ENCODE measurements at regions of chr11 and their contacts with region 1.

Region 1: DNA sequence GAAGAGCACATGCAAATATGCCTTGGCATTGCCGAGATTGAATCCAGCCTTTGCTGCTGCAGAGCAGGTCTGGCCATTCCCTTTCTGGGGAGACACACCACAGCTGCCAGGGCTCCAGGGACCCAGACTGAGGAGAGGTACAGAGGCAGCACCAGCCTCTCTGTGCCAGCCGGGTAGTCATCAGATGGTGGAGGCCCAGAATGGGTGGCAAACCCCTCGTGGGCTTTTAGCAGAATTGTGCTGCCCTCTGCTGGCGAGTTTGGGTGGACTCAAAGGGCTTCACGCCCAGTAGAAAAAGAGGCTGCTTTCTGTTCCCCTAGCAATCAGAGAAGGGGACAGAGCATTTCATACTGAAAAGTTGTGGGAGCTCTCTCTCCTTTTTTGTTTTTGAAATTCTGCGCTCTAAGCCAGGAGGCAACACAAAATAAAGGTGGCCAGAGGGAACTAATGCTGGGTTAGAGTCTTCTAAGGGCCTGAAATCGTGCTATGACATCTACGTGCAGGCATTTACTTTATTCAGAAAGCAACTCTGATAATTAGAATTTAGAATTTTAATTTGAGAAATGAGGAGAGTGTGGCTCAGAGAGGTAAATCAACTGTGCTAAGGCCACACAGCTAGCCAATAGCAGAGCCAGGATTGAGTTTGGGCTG is 158.8 kb upstream of the NAV2 start:
- DNase-seq: peak; percentile 80
- H3K4me3 ChIP-seq: peak overlapping the region in 1 of 2 experiments; percentile 17; a peak in 1 of 4 replicates
- H3K27ac ChIP-seq: no peak overlapping the region
- H3K4me1 ChIP-seq: peaks cover 0 to 14% of the 10 kb centered on the region in 2 experiments; a peak in 2 of 4 replicates
- H3K27me3 ChIP-seq: peaks cover 6% of the 10 kb centered on the region; the same call in 1 of the 2 replicates
- CTCF ChIP-seq: peak; percentile 86
- EP300 ChIP-seq: no peak
- RAD21 ChIP-seq: peak; percentile 99

Region 2: GRCh38 chr11:19076744-19077589 is 476.8 kb before region 1 on chr11:
- CTCF ChIA-PET with region 1: interaction called, 328 read pairs
- POLR2A ChIA-PET with region 1: no interaction called
- DNase-seq: peak; percentile 80
- H3K4me3 ChIP-seq: no peak overlapping the region; a peak in 1 of 4 replicates
- H3K27ac ChIP-seq: peak overlapping the region in 1 of 2 experiments; percentile 39; a peak in 1 of 4 replicates
- H3K4me1 ChIP-seq: peaks cover 0 to 15% of the 10 kb centered on the region in 2 experiments; a peak in 3 of 4 replicates
- H3K27me3 ChIP-seq: no peaks in the 10 kb centered on the region
- CTCF ChIP-seq: peak; percentile 98
- EP300 ChIP-seq: no peak
- RAD21 ChIP-seq: peak; percentile 72

Region 3: DNA sequence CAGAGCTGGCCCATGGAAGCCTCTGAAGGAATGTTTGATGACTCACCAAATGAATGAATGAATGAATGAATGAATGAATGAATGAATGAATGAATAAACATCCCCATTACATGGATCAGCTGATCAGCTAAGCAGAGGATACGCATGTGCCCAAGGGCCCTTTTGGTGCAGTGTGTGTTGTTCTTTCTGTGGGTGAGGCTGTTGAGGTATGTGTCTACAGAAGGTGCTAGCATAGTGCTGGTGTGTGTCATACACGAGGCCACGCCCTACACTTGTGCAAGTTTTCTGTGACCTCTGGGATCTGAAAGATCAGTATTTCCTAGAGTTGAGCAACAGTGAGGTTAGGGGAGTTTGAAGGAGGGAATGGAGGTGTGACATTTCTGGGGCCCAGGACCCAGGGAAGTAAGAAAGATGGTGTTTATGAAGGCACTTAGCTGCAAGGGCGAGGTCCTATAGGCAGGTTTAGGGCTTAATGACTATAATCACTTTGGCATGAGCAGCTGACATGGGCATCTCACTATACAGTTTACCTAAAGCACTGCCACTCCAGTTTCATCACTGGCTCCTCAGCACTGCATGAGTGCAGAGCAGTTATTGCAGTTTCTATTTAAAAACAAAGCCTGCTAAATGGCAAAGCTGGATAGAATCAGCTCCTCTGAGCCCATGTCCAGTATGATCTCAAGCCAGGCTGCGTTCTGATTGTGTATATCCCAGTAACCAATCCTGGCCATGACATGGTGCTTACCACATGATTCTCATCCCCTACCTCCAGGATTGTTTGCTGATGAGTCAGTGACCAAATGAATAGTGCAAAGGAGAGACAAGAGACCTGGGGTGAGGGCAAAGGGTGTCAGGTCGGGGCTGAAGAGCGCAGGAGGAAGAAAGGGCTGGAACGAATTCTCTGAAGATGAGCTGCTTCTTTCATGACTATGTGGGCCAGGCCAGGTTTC is 276.7 kb before region 1 on chr11:
- CTCF ChIA-PET with region 1: interaction called, 10 read pairs
- POLR2A ChIA-PET with region 1: no interaction called
- DNase-seq: no peak
- H3K4me3 ChIP-seq: no peak overlapping the region
- H3K27ac ChIP-seq: no peak overlapping the region
- H3K4me1 ChIP-seq: peaks cover 0 to 4% of the 10 kb centered on the region in 2 experiments; a peak in 1 of 4 replicates
- H3K27me3 ChIP-seq: 0 out of 2 replicates have a peak, but pooled peaks cover 4% of the 10 kb centered on the region
- CTCF ChIP-seq: no peak
- EP300 ChIP-seq: no peak
- RAD21 ChIP-seq: no peak

Region 4: DNA sequence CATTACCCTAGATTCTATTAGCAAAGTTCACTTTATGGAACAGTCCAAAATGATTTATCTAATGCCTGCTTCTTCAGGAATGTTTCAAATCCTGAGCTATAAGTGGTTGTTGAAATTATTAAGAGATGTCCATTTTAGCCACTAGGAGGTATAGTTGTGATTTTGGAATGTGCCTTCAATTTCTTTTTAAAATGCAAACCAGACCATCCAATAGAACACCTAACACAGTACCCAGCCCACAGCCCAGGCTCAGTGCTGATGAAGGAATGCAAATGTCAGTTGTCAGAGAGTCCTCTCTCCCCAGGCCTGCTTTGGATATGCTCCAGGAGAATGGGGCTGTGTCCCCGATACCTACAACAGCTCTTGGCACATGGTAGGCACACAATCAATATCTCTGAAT is 227.3 kb before region 1 on chr11:
- CTCF ChIA-PET with region 1: interaction called, 17 read pairs
- POLR2A ChIA-PET with region 1: no interaction called
- DNase-seq: no peak
- H3K4me3 ChIP-seq: no peak overlapping the region
- H3K27ac ChIP-seq: no peak overlapping the region
- H3K4me1 ChIP-seq: no peaks in the 10 kb centered on the region
- H3K27me3 ChIP-seq: peaks cover 29% of the 10 kb centered on the region; the same call in 1 of the 2 replicates
- CTCF ChIP-seq: peak; percentile 43
- EP300 ChIP-seq: no peak
- RAD21 ChIP-seq: peak; percentile 34; the same call in 1 of the 2 replicates

Region 5: DNA sequence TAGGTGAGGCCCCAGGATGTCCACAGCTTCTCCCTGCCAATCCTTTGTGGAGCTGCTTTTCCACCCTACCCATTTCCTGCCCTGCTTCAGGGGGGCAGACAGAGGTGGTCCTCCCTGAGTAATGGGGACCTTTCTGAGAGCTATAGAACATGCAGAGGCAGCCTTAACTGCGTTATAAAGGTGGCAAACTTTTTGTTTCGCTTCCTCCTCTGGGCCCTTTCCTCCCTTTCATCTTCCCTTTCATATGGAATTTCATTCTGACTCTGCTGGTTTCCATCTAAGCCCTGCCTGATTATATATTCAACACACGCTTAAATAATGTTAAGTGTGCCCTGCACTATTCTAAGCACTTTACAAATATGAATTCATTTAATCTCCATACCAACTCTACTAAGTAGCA is 143.8 kb before region 1 on chr11:
- CTCF ChIA-PET with region 1: no interaction called
- POLR2A ChIA-PET with region 1: no interaction called
- DNase-seq: no peak
- H3K4me3 ChIP-seq: no peak overlapping the region
- H3K27ac ChIP-seq: no peak overlapping the region
- H3K4me1 ChIP-seq: no peaks in the 10 kb centered on the region
- H3K27me3 ChIP-seq: peaks cover 7% of the 10 kb centered on the region; the same call in 1 of the 2 replicates
- CTCF ChIP-seq: no peak
- EP300 ChIP-seq: no peak
- RAD21 ChIP-seq: no peak

Region 6: DNA sequence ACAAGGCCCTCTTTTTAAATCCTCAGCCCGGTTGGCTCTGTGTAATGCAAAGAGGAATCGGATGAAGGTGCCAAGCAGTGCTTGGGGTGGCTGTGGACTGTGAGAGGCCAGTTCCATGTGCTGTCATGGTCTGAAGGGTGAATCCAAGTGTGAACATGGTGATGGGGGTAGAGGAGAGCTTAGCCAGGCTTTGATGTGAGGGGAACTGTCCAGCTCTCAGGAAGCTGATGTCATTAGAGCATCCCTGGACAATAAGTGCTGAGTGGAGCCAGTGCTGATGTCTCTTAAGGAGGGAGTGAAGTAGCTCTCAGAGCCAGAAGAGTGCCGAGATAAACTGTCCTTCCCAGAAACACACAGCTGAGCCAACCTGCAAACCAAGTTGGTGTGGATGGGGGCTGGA is 212.4 kb after region 1 on chr11:
- CTCF ChIA-PET with region 1: interaction called, 11 read pairs
- POLR2A ChIA-PET with region 1: interaction called, 6 read pairs
- DNase-seq: no peak
- H3K4me3 ChIP-seq: no peak overlapping the region
- H3K27ac ChIP-seq: peak overlapping the region in 1 of 2 experiments; percentile 39; a peak in 1 of 4 replicates
- H3K4me1 ChIP-seq: peaks cover 0 to 55% of the 10 kb centered on the region in 2 experiments; a peak in 2 of 4 replicates
- H3K27me3 ChIP-seq: no peaks in the 10 kb centered on the region
- CTCF ChIP-seq: no peak
- EP300 ChIP-seq: no peak
- RAD21 ChIP-seq: no peak